Gastrocnemius medialis (tissue), 4 donors: ENCODE measurements at regions of chr2 and their contacts with region 1.

Region 1: DNA sequence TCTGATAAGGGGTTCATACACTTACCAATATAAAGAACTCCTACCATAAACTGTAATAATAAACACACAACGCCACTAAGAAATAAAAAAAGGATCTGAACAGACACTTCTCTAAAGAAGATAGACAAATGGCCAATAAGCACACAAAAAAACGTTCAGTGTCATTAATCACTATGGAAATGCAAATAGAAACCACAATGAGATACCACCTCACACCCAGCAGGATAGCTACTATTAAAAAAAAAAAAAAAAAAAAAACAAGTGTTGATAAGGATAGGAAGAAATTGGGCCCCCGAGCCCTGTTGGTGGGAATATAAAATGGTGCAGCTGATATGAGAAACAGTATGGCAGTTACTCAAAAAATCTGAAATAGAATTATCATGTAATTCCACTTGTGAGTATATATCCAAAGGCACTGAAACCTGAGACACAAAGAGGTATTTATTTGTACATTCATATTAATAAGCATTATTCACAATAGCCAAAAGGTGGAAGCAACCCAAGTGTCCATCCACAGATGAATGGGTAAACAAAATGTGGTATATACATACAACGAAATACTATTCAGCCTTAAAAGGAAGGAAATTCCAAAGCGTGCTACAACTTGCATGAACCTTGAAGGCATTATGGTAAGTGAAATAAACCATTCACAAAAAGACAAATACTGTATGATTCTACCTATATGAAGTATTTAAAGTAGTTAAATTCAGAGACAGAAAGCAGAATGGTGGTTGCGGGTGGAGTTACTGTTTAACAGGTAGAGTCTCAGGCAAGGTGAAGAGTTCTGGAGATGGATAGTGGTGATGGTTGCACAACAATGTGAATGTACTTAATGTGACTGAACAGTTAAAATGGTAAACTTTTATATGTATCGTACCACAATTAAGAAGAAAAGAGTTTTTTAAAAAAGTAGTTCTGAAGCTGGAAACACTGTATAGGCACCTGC is 17.9 kb downstream of the REV1 start:
- DNase-seq: no peak
- ATAC-seq: no peak
- H3K4me3 ChIP-seq: no peak overlapping the region
- H3K27ac ChIP-seq: no peak overlapping the region
- H3K4me1 ChIP-seq: peaks cover 59 to 66% of the 10 kb centered on the region in 2 donors
- H3K27me3 ChIP-seq: no peaks in the 10 kb centered on the region
- CTCF ChIP-seq: no peak
- POLR2A ChIP-seq: no peak

Region 2: GRCh38 chr2:98944775-98945174 is 527.2 kb before region 1 on chr2:
- in situ Hi-C with region 1: no loop called
- intact Hi-C with region 1: no loop called
- DNase-seq: no peak
- ATAC-seq: no peak
- H3K4me3 ChIP-seq: no peak overlapping the region
- H3K27ac ChIP-seq: no peak overlapping the region
- H3K4me1 ChIP-seq: no peaks in the 10 kb centered on the region
- H3K27me3 ChIP-seq: no peaks in the 10 kb centered on the region
- CTCF ChIP-seq: no peak
- POLR2A ChIP-seq: no peak

Region 3: GRCh38 chr2:99348173-99348572 is 123.8 kb before region 1 on chr2:
- in situ Hi-C with region 1: loop called in 2 of 4 experiments (anchors 10 to 25 kb)
- intact Hi-C with region 1: no loop called
- DNase-seq: no peak
- ATAC-seq: no peak
- H3K4me3 ChIP-seq: no peak overlapping the region
- H3K27ac ChIP-seq: no peak overlapping the region
- H3K4me1 ChIP-seq: peaks cover 0 to 8% of the 10 kb centered on the region in 2 donors
- H3K27me3 ChIP-seq: no peaks in the 10 kb centered on the region
- CTCF ChIP-seq: no peak
- POLR2A ChIP-seq: no peak